PC-9 (cell line): ENCODE measurements at regions of chr6 and their contacts with region 1.

Region 1: DNA sequence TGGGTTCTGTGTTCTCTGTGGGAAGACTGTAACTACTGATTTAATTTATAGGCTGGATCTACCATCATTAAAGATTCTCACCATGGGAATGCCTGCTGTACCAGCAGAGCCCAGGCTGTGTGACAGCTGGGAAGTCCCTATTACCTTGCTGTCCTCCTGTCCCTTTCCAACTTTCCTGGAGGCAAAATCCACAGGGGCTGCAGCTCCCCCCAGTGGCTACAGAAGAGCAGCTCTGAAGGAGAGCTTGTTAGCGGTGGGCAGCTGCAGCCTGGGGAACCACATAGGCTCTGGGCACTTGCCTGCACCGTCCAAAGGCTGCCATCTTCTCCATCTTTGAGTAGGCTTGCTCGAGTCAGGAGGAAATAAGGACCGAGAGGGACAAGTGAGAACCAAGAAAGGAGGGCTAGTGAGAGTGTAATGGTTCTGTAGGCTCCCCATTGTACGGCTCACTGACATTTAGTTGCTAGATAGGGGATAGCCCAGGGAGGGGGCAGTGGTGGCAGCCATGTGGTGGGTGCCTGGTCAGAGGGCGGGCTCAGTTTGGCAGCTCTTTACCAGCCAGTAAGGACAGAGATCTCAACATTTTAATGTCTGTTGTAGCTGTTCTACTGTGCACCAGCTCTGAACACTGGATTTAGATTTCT is 155.1 kb upstream of the MLIP start:
- DNase-seq: peak; percentile 70 to 80
- H3K4me3 ChIP-seq: no peak overlapping the region
- H3K27ac ChIP-seq: no peak overlapping the region
- H3K4me1 ChIP-seq: no peaks in the 10 kb centered on the region
- H3K27me3 ChIP-seq: no peaks in the 10 kb centered on the region
- CTCF ChIP-seq: peak; percentile 88

Region 2: GRCh38 chr6:53103992-53104675 is 852.1 kb before region 1 on chr6:
- CTCF ChIA-PET with region 1: interaction called, 3 read pairs
- POLR2A ChIA-PET with region 1: no interaction called
- intact Hi-C with region 1: loop called (anchors 10 kb)
- DNase-seq: peak; percentile 21 to 42
- H3K4me3 ChIP-seq: no peak overlapping the region
- H3K27ac ChIP-seq: no peak overlapping the region
- H3K4me1 ChIP-seq: peaks cover 12% of the 10 kb centered on the region
- H3K27me3 ChIP-seq: no peaks in the 10 kb centered on the region
- CTCF ChIP-seq: peak; percentile 69

Region 3: GRCh38 chr6:53492860-53493634 is 463.1 kb before region 1 on chr6:
- CTCF ChIA-PET with region 1: interaction called, 3 read pairs
- POLR2A ChIA-PET with region 1: interaction called, 7 read pairs
- intact Hi-C with region 1: loop called (anchors 1 kb)
- DNase-seq: no peak
- H3K4me3 ChIP-seq: no peak overlapping the region
- H3K27ac ChIP-seq: no peak overlapping the region
- H3K4me1 ChIP-seq: peaks cover 17% of the 10 kb centered on the region
- H3K27me3 ChIP-seq: no peaks in the 10 kb centered on the region
- CTCF ChIP-seq: peak; percentile 80

Region 4: DNA sequence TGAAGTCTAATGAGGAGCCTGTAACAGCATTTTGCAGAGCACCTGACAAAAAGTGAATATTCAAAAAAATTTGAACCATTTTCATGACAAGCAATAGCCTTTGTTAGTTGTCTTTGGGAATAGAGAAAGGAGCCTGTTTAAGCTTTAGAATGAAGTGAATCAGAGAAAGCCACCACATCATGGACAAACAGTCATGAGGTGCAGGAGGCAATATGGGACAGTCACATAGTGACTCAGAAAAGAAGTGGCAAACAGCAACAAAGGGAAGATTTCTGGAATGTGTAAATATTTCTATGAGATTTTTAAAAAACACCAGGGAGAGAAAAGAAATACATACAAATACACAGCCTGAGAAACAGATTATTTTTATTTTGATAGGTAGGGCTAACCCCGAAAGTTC is 297.2 kb before region 1 on chr6:
- CTCF ChIA-PET with region 1: interaction called, 3 read pairs
- POLR2A ChIA-PET with region 1: no interaction called
- intact Hi-C with region 1: loop called (anchors 5 kb)
- DNase-seq: peak in 1 of 2 experiments; percentile 44
- H3K4me3 ChIP-seq: no peak overlapping the region
- H3K27ac ChIP-seq: peak overlapping the region; percentile 50
- H3K4me1 ChIP-seq: peaks cover 19% of the 10 kb centered on the region
- H3K27me3 ChIP-seq: no peaks in the 10 kb centered on the region
- CTCF ChIP-seq: no peak

Region 5: DNA sequence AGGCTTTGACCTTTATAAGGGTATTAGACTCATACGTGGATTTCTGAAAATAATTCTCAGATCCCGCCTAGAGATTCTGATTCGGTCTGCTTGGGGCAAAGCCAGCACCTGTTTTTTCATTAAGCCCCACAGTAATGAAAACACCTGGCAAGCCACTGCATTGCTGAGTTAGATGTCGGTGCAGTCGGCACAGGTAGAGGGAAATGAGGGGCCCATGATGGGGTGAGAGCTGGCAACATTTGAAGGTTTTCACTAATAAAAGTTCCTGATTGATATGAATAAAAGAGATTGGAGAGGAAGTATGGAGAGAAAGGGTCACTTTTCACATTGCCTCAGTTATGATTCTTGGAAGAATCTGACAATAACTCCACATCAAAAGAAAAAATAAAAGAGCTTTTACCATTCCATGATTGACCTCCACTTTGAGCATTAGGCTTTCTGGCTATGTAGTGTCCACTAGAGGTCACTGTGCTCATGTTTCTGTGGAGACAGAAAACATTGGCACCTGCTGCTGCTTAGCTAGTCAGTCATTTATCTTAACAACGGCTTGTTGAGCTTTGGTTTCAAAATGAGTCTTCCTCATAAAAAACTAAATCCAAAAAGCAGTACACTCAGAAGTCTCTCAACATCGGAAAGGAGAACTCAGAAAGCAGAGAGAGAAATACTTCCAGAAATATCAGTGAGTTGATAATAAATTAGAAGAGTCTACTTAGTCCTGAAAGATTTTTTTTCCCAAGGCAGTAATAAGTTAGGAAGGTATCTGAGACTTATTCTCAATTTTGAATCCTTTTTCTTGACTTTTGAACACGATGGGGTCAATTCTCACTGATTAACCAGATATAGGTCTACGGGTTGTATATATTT is 237.4 kb before region 1 on chr6:
- CTCF ChIA-PET with region 1: interaction called, 14 read pairs
- POLR2A ChIA-PET with region 1: no interaction called
- intact Hi-C with region 1: loop called (anchors 2 kb)
- DNase-seq: peak; percentile 33 to 70
- H3K4me3 ChIP-seq: no peak overlapping the region
- H3K27ac ChIP-seq: no peak overlapping the region
- H3K4me1 ChIP-seq: peaks cover 17% of the 10 kb centered on the region
- H3K27me3 ChIP-seq: no peaks in the 10 kb centered on the region
- CTCF ChIP-seq: peak; percentile 84

Region 6: GRCh38 chr6:53725791-53726431 is 230.3 kb before region 1 on chr6:
- CTCF ChIA-PET with region 1: interaction called, 20 read pairs
- POLR2A ChIA-PET with region 1: no interaction called
- intact Hi-C with region 1: loop called (anchors 1 kb)
- DNase-seq: peak in 1 of 2 experiments; percentile 72
- H3K4me3 ChIP-seq: no peak overlapping the region
- H3K27ac ChIP-seq: no peak overlapping the region
- H3K4me1 ChIP-seq: peaks cover 55% of the 10 kb centered on the region
- H3K27me3 ChIP-seq: no peaks in the 10 kb centered on the region
- CTCF ChIP-seq: peak; percentile 92

Region 7: DNA sequence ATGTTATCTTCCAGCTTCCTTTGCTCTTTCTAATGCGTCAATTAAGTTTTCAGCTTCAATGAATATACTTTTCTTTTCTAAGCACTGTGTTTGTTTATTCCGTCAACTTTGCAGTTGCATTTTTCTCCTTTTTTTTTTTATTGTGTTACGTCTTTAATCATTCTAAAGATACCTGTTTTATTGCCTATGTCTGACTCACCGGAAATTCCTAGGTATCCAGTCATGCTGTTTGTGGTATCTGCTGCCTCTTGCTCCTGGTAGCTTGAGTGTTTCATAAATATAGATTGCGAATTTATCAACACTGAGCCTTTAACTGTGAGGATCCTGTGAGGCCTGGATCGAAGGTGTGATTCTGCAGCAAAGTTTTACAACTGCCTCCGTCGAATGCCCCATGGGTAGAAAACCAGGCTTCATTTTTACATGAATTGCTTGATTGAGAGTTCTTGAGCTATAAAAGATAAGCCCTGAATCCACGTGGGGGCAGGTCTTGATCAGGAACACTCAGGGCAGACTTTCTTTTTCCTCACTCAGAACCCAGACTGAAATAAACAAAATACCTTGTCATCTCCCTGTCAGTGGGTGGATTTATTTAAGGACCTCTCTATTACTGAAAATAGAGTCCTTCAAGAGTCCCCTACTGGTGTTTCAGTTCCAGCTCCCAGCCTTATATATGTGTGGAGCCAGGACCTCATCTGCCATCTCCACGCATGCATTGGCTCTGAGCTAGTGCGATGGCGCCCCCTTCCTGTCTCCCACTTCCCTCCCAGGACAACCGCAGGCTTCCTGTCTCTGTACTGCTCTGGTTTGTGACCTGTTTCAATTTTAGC is 221.5 kb before region 1 on chr6:
- CTCF ChIA-PET with region 1: interaction called, 16 read pairs
- POLR2A ChIA-PET with region 1: no interaction called
- intact Hi-C with region 1: loop called (anchors 2 kb)
- DNase-seq: peak; percentile 59 to 96
- H3K4me3 ChIP-seq: peak overlapping the region; percentile 44
- H3K27ac ChIP-seq: peak overlapping the region; percentile 95
- H3K4me1 ChIP-seq: peaks cover 53% of the 10 kb centered on the region
- H3K27me3 ChIP-seq: no peaks in the 10 kb centered on the region
- CTCF ChIP-seq: peak; percentile 61

Region 8: GRCh38 chr6:54255886-54256285 is 299.7 kb after region 1 on chr6:
- CTCF ChIA-PET with region 1: no interaction called
- POLR2A ChIA-PET with region 1: no interaction called
- intact Hi-C with region 1: no loop called
- DNase-seq: no peak
- H3K4me3 ChIP-seq: no peak overlapping the region
- H3K27ac ChIP-seq: no peak overlapping the region
- H3K4me1 ChIP-seq: no peaks in the 10 kb centered on the region
- H3K27me3 ChIP-seq: no peaks in the 10 kb centered on the region
- CTCF ChIP-seq: no peak